Activated naive CD4-positive, alpha-beta T cell treated with anti-CD3 and anti-CD28 coated beads, Interleukin-2, amount 10 ng/mL, durations not matched to agents 7 days and 5 days (primary cell): ENCODE measurements at regions of chr16 and their contacts with region 1.

Region 1: DNA sequence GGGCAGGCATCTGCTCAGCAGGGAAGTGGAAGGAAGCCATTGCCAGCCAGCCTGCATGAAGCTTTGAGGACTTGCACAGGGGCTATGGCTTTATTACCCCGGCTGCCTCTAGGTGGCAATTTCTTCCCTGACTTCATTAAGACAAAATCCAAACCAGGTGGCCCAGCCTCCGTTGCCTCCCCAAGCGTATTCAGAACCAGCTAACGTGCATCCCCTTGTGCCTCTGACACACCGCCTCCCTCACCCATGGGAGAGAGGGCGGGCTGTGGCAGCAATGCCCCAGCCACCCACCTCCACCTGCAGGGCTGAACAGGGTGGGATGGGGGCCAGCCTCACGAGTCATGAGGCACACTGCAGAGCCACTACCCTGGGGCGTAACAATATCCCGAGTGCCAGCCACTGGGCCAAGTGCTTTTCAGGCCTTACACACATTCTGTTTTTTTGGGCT is 6.8 kb downstream of the KIFC3 start:
- DNase-seq: peak; percentile 60
- H3K4me3 Mint-ChIP-seq: no peak overlapping the region
- H3K27ac Mint-ChIP-seq: no peak overlapping the region
- H3K4me1 Mint-ChIP-seq: peaks cover 17% of the 10 kb centered on the region
- H3K27me3 Mint-ChIP-seq: peaks cover 58% of the 10 kb centered on the region

Region 2: GRCh38 chr16:57667526-57668258 is 127.8 kb before region 1 on chr16:
- CTCF ChIA-PET with region 1: no interaction called
- DNase-seq: no peak
- H3K4me3 Mint-ChIP-seq: no peak overlapping the region
- H3K27ac Mint-ChIP-seq: no peak overlapping the region
- H3K4me1 Mint-ChIP-seq: no peaks in the 10 kb centered on the region
- H3K27me3 Mint-ChIP-seq: peaks cover 36% of the 10 kb centered on the region

Region 3: GRCh38 chr16:57863434-57864160 is 68.1 kb after region 1 on chr16:
- CTCF ChIA-PET with region 1: interaction called, 13 read pairs
- DNase-seq: no peak
- H3K4me3 Mint-ChIP-seq: no peak overlapping the region
- H3K27ac Mint-ChIP-seq: no peak overlapping the region
- H3K4me1 Mint-ChIP-seq: no peaks in the 10 kb centered on the region
- H3K27me3 Mint-ChIP-seq: peaks cover 19% of the 10 kb centered on the region